ENCODE measurements at regions of chr2 and their contacts with region 1.

Region 1: GRCh38 chr2:173965329-173966025 is at the start of gene SP3:
- DNase-seq: peak; percentile 91
- ATAC-seq: peak; percentile 66
- H3K4me3 Mint-ChIP-seq: peak within 1 kb of the TSS; percentile 93
- H3K27ac Mint-ChIP-seq: peak within 1 kb of the TSS; percentile 98
- H3K4me1 Mint-ChIP-seq: peaks cover 45% of the 10 kb centered on the region
- H3K27me3 Mint-ChIP-seq: no peaks in the 10 kb centered on the region
- CTCF ChIP-seq: no peak
- total RNA-seq, gene SP3: 124 and 139 TPM in 2 replicates

Region 2: GRCh38 chr2:173791502-173791901 is 174.0 kb before region 1 on chr2:
- CTCF ChIA-PET with region 1: no interaction called
- POLR2A ChIA-PET with region 1: no interaction called
- intact Hi-C with region 1: no loop called
- DNase-seq: no peak
- ATAC-seq: no peak
- H3K4me3 Mint-ChIP-seq: no peak overlapping the region
- H3K27ac Mint-ChIP-seq: no peak overlapping the region
- H3K4me1 Mint-ChIP-seq: peaks cover 2% of the 10 kb centered on the region
- H3K27me3 Mint-ChIP-seq: peaks cover 16% of the 10 kb centered on the region
- CTCF ChIP-seq: no peak

Region 3: GRCh38 chr2:173924285-173924684 is 41.2 kb before region 1 on chr2:
- CTCF ChIA-PET with region 1: no interaction called
- POLR2A ChIA-PET with region 1: interaction called, 5 read pairs
- intact Hi-C with region 1: loop called (anchors 2 kb)
- DNase-seq: no peak
- ATAC-seq: no peak
- H3K4me3 Mint-ChIP-seq: no peak overlapping the region
- H3K27ac Mint-ChIP-seq: no peak overlapping the region
- H3K4me1 Mint-ChIP-seq: peaks cover 60% of the 10 kb centered on the region
- H3K27me3 Mint-ChIP-seq: no peaks in the 10 kb centered on the region
- CTCF ChIP-seq: no peak

Region 4: GRCh38 chr2:173990970-173991819 is 25.7 kb after region 1 on chr2:
- CTCF ChIA-PET with region 1: no interaction called
- POLR2A ChIA-PET with region 1: interaction called, 105 read pairs
- intact Hi-C with region 1: loop called (anchors 1 kb)
- DNase-seq: peak; percentile 22
- ATAC-seq: peak; percentile 96
- H3K4me3 Mint-ChIP-seq: peak overlapping the region; percentile 68
- H3K27ac Mint-ChIP-seq: peak overlapping the region; percentile 89
- H3K4me1 Mint-ChIP-seq: peaks cover 40% of the 10 kb centered on the region
- H3K27me3 Mint-ChIP-seq: no peaks in the 10 kb centered on the region
- CTCF ChIP-seq: no peak

Region 5: DNA sequence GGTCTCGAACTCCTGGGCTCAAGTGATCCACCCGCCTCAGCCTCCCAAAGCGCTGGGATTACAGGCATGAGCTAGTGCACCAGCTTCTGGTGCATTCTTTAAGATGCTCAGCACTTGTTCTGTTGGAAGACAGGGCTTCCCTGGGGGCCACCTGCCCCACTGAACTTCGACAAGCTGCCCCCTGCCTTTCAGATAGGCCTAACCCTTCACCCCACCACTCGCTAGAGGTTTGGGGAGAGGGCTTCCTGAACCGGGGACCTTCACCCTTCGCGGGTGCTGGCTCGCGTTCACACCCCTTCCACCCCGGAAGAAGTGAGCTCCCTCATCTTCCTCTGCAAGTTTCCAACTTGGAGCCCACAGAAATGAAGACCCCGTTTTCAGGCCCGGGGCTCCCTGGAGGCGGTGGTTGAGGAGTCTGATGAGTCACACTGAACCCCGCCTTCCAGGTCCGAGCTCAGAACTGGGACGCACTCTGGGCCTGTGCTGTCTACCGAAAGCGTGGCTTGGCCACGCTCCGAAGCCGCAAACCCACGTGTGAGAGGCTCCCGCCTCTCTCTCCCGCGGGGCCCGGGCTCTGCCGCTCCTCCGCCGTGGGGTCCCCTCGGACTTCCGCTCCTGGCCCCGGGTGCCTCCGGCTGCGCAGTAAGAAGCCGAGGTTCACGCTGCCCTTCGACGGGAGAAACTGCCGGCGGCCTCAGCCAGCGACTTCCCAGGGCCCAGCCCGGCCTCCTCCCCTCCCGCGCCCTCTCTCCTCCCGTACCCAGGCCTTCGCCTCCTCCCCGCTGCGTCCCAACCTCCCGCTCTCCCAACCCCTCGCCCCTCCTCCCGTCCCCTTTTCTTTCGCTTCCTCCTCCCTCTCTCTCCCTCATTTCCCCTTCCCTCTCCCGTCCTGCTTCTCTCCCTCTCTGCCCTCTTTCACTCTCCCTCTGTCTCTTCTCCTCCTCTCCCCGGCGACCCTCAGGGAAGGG is 47.2 kb after region 1 on chr2:
- CTCF ChIA-PET with region 1: no interaction called
- POLR2A ChIA-PET with region 1: interaction called, 12 read pairs
- intact Hi-C with region 1: loop called (anchors 1 kb)
- DNase-seq: peak; percentile 46
- ATAC-seq: peak; percentile 74
- H3K4me3 Mint-ChIP-seq: peak overlapping the region; percentile 73
- H3K27ac Mint-ChIP-seq: peak overlapping the region; percentile 53
- H3K4me1 Mint-ChIP-seq: peaks cover 15% of the 10 kb centered on the region
- H3K27me3 Mint-ChIP-seq: no peaks in the 10 kb centered on the region
- CTCF ChIP-seq: no peak

Region 6: GRCh38 chr2:174248187-174248997 is 282.9 kb after region 1 on chr2 and contains the start of gene OLA1:
- CTCF ChIA-PET with region 1: no interaction called
- POLR2A ChIA-PET with region 1: interaction called, 18 read pairs
- intact Hi-C with region 1: loop called (anchors 1 kb)
- DNase-seq: peak; percentile 99
- ATAC-seq: peak; percentile 97
- H3K4me3 Mint-ChIP-seq: peak within 1 kb of the TSS; percentile 88
- H3K27ac Mint-ChIP-seq: peak within 1 kb of the TSS; percentile 86
- H3K4me1 Mint-ChIP-seq: peaks cover 27% of the 10 kb centered on the region
- H3K27me3 Mint-ChIP-seq: no peaks in the 10 kb centered on the region
- CTCF ChIP-seq: no peak
- total RNA-seq, gene OLA1: 74.4 and 86.6 TPM in 2 replicates

Region 7: GRCh38 chr2:174487108-174487819 is 521.8 kb after region 1 on chr2:
- CTCF ChIA-PET with region 1: no interaction called
- POLR2A ChIA-PET with region 1: interaction called, 4 read pairs
- intact Hi-C with region 1: loop called (anchors 2 kb)
- DNase-seq: peak; percentile 86
- ATAC-seq: peak; percentile 97
- H3K4me3 Mint-ChIP-seq: peak overlapping the region; percentile 96
- H3K27ac Mint-ChIP-seq: peak overlapping the region; percentile 93
- H3K4me1 Mint-ChIP-seq: peaks cover 41% of the 10 kb centered on the region
- H3K27me3 Mint-ChIP-seq: no peaks in the 10 kb centered on the region
- CTCF ChIP-seq: no peak

Region 8: DNA sequence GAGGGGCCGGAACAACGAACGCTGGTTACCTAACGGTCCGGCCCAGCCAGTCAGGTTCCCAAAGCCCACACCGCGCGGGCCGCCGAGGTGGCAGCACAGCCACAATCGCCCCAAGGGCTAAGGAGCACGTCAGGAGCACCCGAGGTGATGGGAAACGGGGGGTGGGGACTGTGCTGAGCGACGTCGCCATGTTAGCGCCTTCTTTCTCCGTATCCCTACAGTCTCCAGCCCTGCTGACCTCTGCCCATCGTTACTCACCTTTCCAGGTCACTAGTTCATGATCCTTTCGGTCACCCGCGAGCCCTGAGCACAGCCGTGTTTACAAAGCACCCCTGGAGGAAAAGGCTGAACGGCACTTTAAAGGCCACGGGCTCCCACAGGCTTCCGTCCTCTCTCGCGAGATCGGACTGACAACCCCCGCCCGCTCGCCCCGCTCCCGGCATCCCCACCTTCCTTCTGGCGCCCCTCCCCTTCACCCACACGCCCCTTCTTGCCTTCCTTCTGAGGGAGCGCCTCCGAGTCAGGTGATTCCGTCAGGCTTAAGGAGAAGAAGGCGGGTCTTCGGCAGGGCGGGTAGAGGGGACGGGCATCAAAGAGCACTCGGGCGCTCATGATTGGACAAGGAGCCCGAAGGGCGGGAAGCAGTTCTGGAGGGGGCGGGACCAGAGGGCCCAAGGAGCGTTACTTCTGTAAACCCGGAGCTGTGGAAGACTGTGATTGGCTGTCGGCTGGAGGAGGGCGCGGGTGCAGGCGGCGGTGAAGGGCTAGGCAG is 1202.5 kb after region 1 on chr2 and contains the start of gene ATF2:
- CTCF ChIA-PET with region 1: no interaction called
- POLR2A ChIA-PET with region 1: interaction called, 3 read pairs
- intact Hi-C with region 1: loop called (anchors 5 kb)
- DNase-seq: peak; percentile 87
- ATAC-seq: peak; percentile 92
- H3K4me3 Mint-ChIP-seq: peak within 1 kb of the TSS; percentile 100
- H3K27ac Mint-ChIP-seq: peak within 1 kb of the TSS; percentile 99
- H3K4me1 Mint-ChIP-seq: peaks cover 43% of the 10 kb centered on the region
- H3K27me3 Mint-ChIP-seq: no peaks in the 10 kb centered on the region
- CTCF ChIP-seq: no peak
- total RNA-seq, gene ATF2: 49.0 and 59.9 TPM in 2 replicates

Measured in activated B cell treated with CpG ODN at 0.5 μM for 24 hours (primary cell).